ENCODE measurements at regions of chr12 and their contacts with region 1.

Region 1: GRCh38 chr12:132489602-132490239 is at the start of gene FBRSL1:
- DNase-seq: peak; percentile 86 to 92 (median 86)
- H3K4me3 ChIP-seq: peak within 1 kb of the TSS; percentile 86 to 94 (median 91)
- H3K4me3 Mint-ChIP-seq: peak within 1 kb of the TSS; percentile 91 to 96
- H3K27ac ChIP-seq: peak within 1 kb of the TSS; percentile 99 to 100
- H3K27ac Mint-ChIP-seq: peak within 1 kb of the TSS; percentile 98 to 99 (median 98)
- H3K4me1 ChIP-seq: peaks cover 47 to 63% of the 10 kb centered on the region in 2 donors
- H3K4me1 Mint-ChIP-seq: peaks cover 55% of the 10 kb centered on the region
- H3K27me3 ChIP-seq: no peaks in the 10 kb centered on the region
- H3K27me3 Mint-ChIP-seq: peaks cover 2 to 7% (median 4%) of the 10 kb centered on the region in 3 donors
- CTCF ChIP-seq: no peak
- polyA plus RNA-seq, gene FBRSL1: 0.39 to 28.7 (median 0.74) TPM

Region 2: GRCh38 chr12:130871286-130872178 is 1618.2 kb before region 1 on chr12 and contains the start of gene RAN:
- intact Hi-C with region 1: loop called in 1 of 2 experiments (anchors 10 kb)
- DNase-seq: peak; percentile 86 to 91 (median 87)
- H3K4me3 ChIP-seq: peak within 1 kb of the TSS; percentile 63 to 97 (median 81)
- H3K4me3 Mint-ChIP-seq: peak within 1 kb of the TSS; percentile 76 to 92
- H3K27ac ChIP-seq: peak within 1 kb of the TSS; percentile 67 to 84
- H3K27ac Mint-ChIP-seq: peak within 1 kb of the TSS; percentile 86 to 95 (median 92)
- H3K4me1 ChIP-seq: peaks cover 17 to 30% of the 10 kb centered on the region in 2 donors
- H3K4me1 Mint-ChIP-seq: peaks cover 27% of the 10 kb centered on the region
- H3K27me3 ChIP-seq: no peaks in the 10 kb centered on the region
- H3K27me3 Mint-ChIP-seq: peaks cover 0 to 4% (median 0%) of the 10 kb centered on the region in 3 donors
- CTCF ChIP-seq: no peak
- polyA plus RNA-seq, gene RAN: 197 to 443 (median 366) TPM

Region 3: GRCh38 chr12:132083941-132084620 is 405.6 kb before region 1 on chr12:
- intact Hi-C with region 1: loop called in 1 of 2 experiments (anchors 5 kb)
- DNase-seq: peak; percentile 87 to 91 (median 90)
- H3K4me3 ChIP-seq: peak overlapping the region; percentile 58 to 82 (median 77)
- H3K4me3 Mint-ChIP-seq: peak overlapping the region; percentile 67 to 90
- H3K27ac ChIP-seq: peak overlapping the region; percentile 29 to 87
- H3K27ac Mint-ChIP-seq: peak overlapping the region in 6 of 7 donors; percentile 24 to 89 (median 72)
- H3K4me1 ChIP-seq: peaks cover 14 to 15% of the 10 kb centered on the region in 2 donors
- H3K4me1 Mint-ChIP-seq: peaks cover 18% of the 10 kb centered on the region
- H3K27me3 ChIP-seq: no peaks in the 10 kb centered on the region
- H3K27me3 Mint-ChIP-seq: peaks cover 0 to 2% (median 0%) of the 10 kb centered on the region in 3 donors
- CTCF ChIP-seq: no peak

Region 4: GRCh38 chr12:132144115-132144812 is 345.5 kb before region 1 on chr12 and contains the starts of genes DDX51 and NOC4L:
- intact Hi-C with region 1: loop called in 1 of 2 experiments (anchors 10 kb)
- DNase-seq: peak; percentile 92 to 97 (median 97)
- H3K4me3 ChIP-seq: peak within 1 kb of the TSS; percentile 81 to 93 (median 88)
- H3K4me3 Mint-ChIP-seq: peak within 1 kb of the TSS; percentile 82 to 89
- H3K27ac ChIP-seq: peak within 1 kb of the TSS; percentile 17 to 92
- H3K27ac Mint-ChIP-seq: peak within 1 kb of the TSS; percentile 75 to 94 (median 87)
- H3K4me1 ChIP-seq: peaks cover 16 to 24% of the 10 kb centered on the region in 2 donors
- H3K4me1 Mint-ChIP-seq: peaks cover 21% of the 10 kb centered on the region
- H3K27me3 ChIP-seq: no peaks in the 10 kb centered on the region
- H3K27me3 Mint-ChIP-seq: peaks cover 0 to 3% (median 0%) of the 10 kb centered on the region in 3 donors
- CTCF ChIP-seq: no peak
- polyA plus RNA-seq, gene DDX51: 1.7 to 24.9 (median 2.7) TPM
- polyA plus RNA-seq, gene NOC4L: 7.3 to 18.0 (median 17.9) TPM

Region 5: DNA sequence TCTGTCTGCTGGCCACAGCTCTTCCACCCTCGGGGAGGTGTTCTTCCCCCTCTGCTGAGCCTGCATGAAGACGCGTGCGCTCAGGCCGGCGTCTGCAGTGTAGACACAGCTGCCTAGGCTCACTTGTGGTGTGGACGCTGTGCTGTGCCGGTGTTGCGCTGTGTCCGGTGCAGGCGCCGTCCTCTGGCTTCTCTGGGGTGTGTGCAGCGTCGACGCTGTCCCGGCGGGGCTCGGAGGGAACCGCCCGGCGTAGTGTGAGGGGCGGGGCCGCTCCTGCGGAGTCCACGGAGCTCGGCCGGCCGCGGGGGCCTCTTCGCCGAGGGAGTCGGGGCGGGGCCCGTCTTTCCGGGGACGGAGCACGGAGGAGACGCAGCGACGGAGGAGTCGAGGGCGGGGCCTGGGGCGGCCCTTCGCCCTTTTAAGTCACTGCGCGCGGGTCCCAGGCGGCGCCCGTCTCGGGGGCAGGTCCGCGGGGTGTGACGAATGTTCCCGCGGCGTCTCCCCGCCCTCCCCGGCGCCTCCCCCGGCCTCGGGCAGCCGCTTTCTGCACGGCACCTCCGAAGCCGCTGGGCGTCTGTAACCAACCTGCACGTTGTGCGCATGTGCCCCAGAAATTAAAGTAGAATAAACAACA is 300.2 kb before region 1 on chr12:
- intact Hi-C with region 1: loop called in 1 of 2 experiments (anchors 10 kb)
- DNase-seq: peak; percentile 84 to 93 (median 86)
- H3K4me3 ChIP-seq: peak overlapping the region; percentile 48 to 77 (median 76)
- H3K4me3 Mint-ChIP-seq: peak overlapping the region; percentile 88 to 97
- H3K27ac ChIP-seq: peak overlapping the region; percentile 55 to 69
- H3K27ac Mint-ChIP-seq: peak overlapping the region in 6 of 7 donors; percentile 84 to 97 (median 94)
- H3K4me1 ChIP-seq: peaks cover 32 to 40% of the 10 kb centered on the region in 2 donors
- H3K4me1 Mint-ChIP-seq: peaks cover 29% of the 10 kb centered on the region
- H3K27me3 ChIP-seq: peaks cover 0 to 47% of the 10 kb centered on the region in 2 donors
- H3K27me3 Mint-ChIP-seq: peaks cover 13 to 69% (median 37%) of the 10 kb centered on the region in 3 donors
- CTCF ChIP-seq: no peak

Region 6: DNA sequence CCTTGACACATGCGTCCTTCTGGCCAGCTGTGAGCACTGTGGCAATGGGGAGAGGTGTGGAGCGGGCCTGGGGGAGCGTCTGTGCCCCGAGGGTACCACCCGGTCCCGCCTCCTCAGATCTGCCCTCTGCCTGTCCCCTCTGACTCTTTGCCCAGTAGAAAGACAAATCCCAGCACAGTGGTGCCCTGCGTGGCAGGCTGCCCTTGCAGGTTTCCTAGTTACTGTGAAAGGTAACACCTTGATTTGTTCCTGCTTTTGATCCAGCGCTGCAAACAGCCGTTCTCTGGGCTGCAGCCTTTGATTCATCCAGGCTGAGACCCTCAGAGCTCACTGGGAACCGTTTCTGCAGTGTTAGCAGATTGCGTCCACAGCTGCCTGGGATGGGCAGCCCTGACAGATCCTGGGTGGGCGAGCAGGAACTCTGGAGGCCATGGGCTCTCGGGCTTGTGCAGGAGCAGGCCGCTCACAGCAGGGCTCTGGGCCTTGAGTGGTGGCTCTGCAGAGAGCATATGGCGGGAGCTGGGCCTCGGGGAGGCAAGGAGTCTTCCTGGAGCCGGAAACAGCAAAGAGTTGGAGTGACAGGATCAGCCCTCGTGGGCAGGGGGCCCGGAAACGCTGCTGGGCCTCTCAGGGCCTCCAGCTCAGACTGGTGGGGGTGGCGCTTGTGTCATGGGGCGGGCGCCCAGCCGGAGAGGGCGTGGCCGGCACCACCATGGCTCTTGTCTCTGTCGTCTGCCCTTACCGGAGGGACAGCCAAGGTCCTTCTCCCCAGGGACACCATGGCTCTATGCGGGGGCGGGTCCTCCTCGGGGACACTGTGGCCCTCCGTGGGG is 16.8 kb after region 1 on chr12:
- intact Hi-C with region 1: loop called in 1 of 2 experiments (anchors 2 kb)
- DNase-seq: peak; percentile 29 to 49 (median 42)
- H3K4me3 ChIP-seq: peak overlapping the region in 1 of 3 experiments; percentile 61
- H3K4me3 Mint-ChIP-seq: peak overlapping the region; percentile 61 to 83
- H3K27ac ChIP-seq: peak overlapping the region in 1 of 2 donors; percentile 70
- H3K27ac Mint-ChIP-seq: peak overlapping the region in 6 of 7 donors; percentile 15 to 80 (median 58)
- H3K4me1 ChIP-seq: peaks cover 49 to 58% of the 10 kb centered on the region in 2 donors
- H3K4me1 Mint-ChIP-seq: peaks cover 53% of the 10 kb centered on the region
- H3K27me3 ChIP-seq: no peaks in the 10 kb centered on the region
- H3K27me3 Mint-ChIP-seq: peaks cover 0 to 28% (median 0%) of the 10 kb centered on the region in 3 donors
- CTCF ChIP-seq: no peak

Measured in CD14-positive monocyte (primary cell).